ENCODE measurements at regions of chr6 and their contacts with region 1.

Region 1: GRCh38 chr6:32947552-32948465 is 5.1 kb downstream of the HLA-DMA start:
- DNase-seq: peak in 2 of 4 experiments; percentile 48 to 62
- ATAC-seq: peak; percentile 86
- H3K4me3 ChIP-seq: no peak overlapping the region
- H3K27ac ChIP-seq: no peak overlapping the region
- H3K4me1 ChIP-seq: no peaks in the 10 kb centered on the region
- H3K27me3 ChIP-seq: peaks cover 2 to 24% of the 10 kb centered on the region in 2 experiments; a peak in 3 of 5 replicates
- CTCF ChIP-seq: peak; percentile 63 to 77 (median 71)
- EP300 ChIP-seq: no peak
- POLR2A ChIP-seq: no peak
- RAD21 ChIP-seq: peak; percentile 56 to 83

Region 2: GRCh38 chr6:32933636-32934085 is 14.1 kb before region 1 on chr6:
- CTCF ChIA-PET with region 1: interaction called, 10 read pairs
- POLR2A ChIA-PET with region 1: interaction called, 3 read pairs
- in situ Hi-C with region 1: no loop called
- intact Hi-C with region 1: no loop called
- DNase-seq: peak; percentile 78 to 85 (median 82)
- ATAC-seq: peak; percentile 92
- H3K4me3 ChIP-seq: no peak overlapping the region
- H3K27ac ChIP-seq: no peak overlapping the region
- H3K4me1 ChIP-seq: no peaks in the 10 kb centered on the region
- H3K27me3 ChIP-seq: peaks cover 17 to 34% of the 10 kb centered on the region in 2 experiments
- CTCF ChIP-seq: peak; percentile 85 to 94 (median 91)
- EP300 ChIP-seq: no peak
- POLR2A ChIP-seq: no peak
- RAD21 ChIP-seq: peak; percentile 86 to 91

Measured in K562 (cell line).